ENCODE measurements at regions of chr6 and their contacts with region 1.

Region 1: GRCh38 chr6:116695401-116695800 is 14.4 kb downstream of the KPNA5 start:
- DNase-seq: peak in 1 of 2 donors; percentile 45
- ATAC-seq: peak; percentile 84 to 97 (median 87)
- H3K4me3 ChIP-seq: no peak overlapping the region
- H3K4me3 Mint-ChIP-seq: no peak overlapping the region
- H3K27ac ChIP-seq: no peak overlapping the region
- H3K27ac Mint-ChIP-seq: peak overlapping the region; percentile 73 to 81
- H3K4me1 ChIP-seq: peaks cover 4% of the 10 kb centered on the region
- H3K4me1 Mint-ChIP-seq: peaks cover 23 to 30% of the 10 kb centered on the region in 2 donors
- H3K27me3 ChIP-seq: no peaks in the 10 kb centered on the region
- H3K27me3 Mint-ChIP-seq: no peaks in the 10 kb centered on the region
- CTCF ChIP-seq: no peak

Region 2: DNA sequence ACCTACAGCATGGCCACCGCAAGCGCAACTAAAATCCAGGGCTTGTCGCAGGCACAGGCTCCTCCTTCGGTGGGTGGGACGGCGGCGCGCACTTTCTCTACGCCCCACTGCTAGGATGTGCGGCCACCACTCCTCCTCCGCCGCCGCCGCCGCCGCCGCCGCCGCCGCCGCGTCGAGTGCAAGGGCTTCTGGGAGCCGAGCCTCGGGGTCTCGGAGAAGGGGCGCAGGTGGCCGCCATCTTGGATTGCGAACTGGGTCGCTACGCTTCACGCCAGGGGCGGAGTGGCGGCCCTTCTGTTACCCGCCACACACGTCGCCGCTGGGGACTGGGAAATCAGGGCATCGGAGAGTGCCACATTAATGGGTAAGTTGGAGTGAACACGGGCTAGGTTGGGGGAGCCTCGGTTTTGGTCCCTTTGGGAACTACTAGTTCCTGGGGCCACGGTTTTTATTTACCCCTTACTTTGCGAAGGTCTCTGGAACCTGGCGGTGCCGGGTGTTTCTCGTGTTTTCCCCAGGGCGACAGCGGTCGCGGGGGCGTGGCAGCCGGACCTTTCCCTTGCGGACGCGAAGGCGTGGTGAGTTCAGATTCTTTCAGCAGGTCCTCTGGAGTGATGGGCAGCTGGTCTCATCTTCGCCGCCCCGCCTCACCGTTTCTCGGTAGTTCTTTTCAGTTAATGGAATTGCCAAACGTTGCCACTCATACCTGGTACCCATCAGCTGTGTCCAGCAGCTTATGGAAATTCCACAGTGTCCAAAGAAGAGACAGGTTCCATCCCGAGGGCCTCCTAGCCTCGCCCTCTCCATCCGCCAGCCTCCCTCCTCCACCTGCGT is 14.2 kb before region 1 on chr6 and contains the start of gene KPNA5:
- intact Hi-C with region 1: loop called (anchors 1 kb)
- DNase-seq: peak; percentile 81 to 94
- ATAC-seq: peak; percentile 91 to 97 (median 93)
- H3K4me3 ChIP-seq: peak within 1 kb of the TSS; percentile 78
- H3K4me3 Mint-ChIP-seq: peak within 1 kb of the TSS; percentile 99
- H3K27ac ChIP-seq: peak within 1 kb of the TSS; percentile 87
- H3K27ac Mint-ChIP-seq: peak within 1 kb of the TSS; percentile 94 to 100
- H3K4me1 ChIP-seq: peaks cover 17% of the 10 kb centered on the region
- H3K4me1 Mint-ChIP-seq: peaks cover 29 to 39% of the 10 kb centered on the region in 2 donors
- H3K27me3 ChIP-seq: no peaks in the 10 kb centered on the region
- H3K27me3 Mint-ChIP-seq: no peaks in the 10 kb centered on the region
- CTCF ChIP-seq: no peak
- total RNA-seq, gene KPNA5: 28.6 to 31.4 (median 29.1) TPM

Measured in natural killer cell (primary cell).